H1 (cell line): ENCODE measurements at regions of chr10 and their contacts with region 1.

Region 1: DNA sequence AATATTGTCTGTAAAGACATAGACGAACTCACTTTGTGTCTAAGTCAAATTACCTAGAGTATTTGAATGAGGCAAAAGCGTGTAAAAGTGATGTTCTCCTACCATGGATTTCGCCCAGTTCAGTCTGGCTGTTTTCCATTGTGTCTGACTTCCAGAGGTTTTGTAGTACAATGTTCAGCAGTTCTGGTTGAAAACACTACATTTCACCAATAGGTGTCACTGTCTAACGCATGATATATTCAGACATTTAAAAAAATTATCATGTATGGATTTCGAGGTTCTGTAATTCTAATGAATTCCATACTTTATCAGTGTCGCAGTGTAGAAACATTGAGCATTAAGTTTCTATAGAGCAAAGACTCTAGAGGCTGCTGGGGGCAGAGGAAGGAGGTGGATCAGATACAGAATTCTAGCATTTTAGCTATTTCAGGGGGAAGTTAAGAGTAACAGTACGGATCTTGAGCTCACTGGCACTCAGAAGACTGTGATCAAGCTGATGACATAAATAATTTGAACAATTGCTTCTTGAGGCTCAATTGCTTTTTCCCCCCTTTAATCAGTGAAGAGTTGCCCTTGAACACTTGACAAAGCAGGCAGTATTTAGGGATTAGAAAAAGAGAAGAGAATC is 196.9 kb upstream of the RHOBTB1 start:
- DNase-seq: no peak
- H3K4me3 ChIP-seq: no peak overlapping the region
- H3K27ac ChIP-seq: no peak overlapping the region
- H3K4me1 ChIP-seq: peaks cover 1 to 8% (median 6%) of the 10 kb centered on the region in 4 experiments; a peak in 6 of 7 replicates
- H3K27me3 ChIP-seq: no peaks in the 10 kb centered on the region
- CTCF ChIP-seq: peak in 2 of 3 experiments; percentile 16 to 52; a peak in 2 of 4 replicates
- EP300 ChIP-seq: no peak
- POLR2A ChIP-seq: no peak
- RAD21 ChIP-seq: peak; percentile 40 to 41; a peak in 3 of 4 replicates

Region 2: DNA sequence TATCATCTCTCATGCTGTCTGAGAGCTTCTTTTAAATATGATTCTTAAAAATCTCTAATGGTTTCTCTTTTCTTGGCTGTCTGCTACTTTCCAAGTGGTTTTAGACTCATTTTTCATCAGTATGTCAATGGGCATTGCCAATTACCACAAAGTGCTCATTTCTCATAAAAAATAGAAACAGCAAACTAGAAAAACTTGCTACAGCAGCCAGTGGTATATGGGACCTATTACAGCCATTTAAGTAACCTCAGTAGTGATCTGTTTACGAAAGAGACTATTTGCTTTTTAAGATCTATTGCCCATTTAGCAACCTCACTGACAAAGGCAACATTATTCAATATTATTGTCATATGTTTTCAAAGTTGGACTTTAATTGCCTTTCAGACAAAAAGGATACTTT is 10.2 kb after region 1 on chr10:
- CTCF ChIA-PET with region 1: interaction called, 28 read pairs
- POLR2A ChIA-PET with region 1: no interaction called
- DNase-seq: no peak
- H3K4me3 ChIP-seq: no peak overlapping the region
- H3K27ac ChIP-seq: no peak overlapping the region
- H3K4me1 ChIP-seq: no peaks in the 10 kb centered on the region
- H3K27me3 ChIP-seq: no peaks in the 10 kb centered on the region; a peak in 1 of 7 replicates
- CTCF ChIP-seq: no peak
- EP300 ChIP-seq: no peak
- POLR2A ChIP-seq: no peak
- RAD21 ChIP-seq: no peak

Region 3: GRCh38 chr10:61159253-61159652 is 18.4 kb after region 1 on chr10:
- CTCF ChIA-PET with region 1: interaction called, 28 read pairs
- POLR2A ChIA-PET with region 1: no interaction called
- DNase-seq: no peak
- H3K4me3 ChIP-seq: no peak overlapping the region
- H3K27ac ChIP-seq: no peak overlapping the region
- H3K4me1 ChIP-seq: no peaks in the 10 kb centered on the region
- H3K27me3 ChIP-seq: no peaks in the 10 kb centered on the region
- CTCF ChIP-seq: no peak
- EP300 ChIP-seq: no peak
- POLR2A ChIP-seq: no peak
- RAD21 ChIP-seq: no peak

Region 4: GRCh38 chr10:61188691-61189090 is 47.8 kb after region 1 on chr10:
- CTCF ChIA-PET with region 1: interaction called, 26 read pairs
- POLR2A ChIA-PET with region 1: no interaction called
- DNase-seq: no peak
- H3K4me3 ChIP-seq: no peak overlapping the region
- H3K27ac ChIP-seq: no peak overlapping the region
- H3K4me1 ChIP-seq: peaks cover 0 to 3% (median 0%) of the 10 kb centered on the region in 4 experiments; a peak in 1 of 7 replicates
- H3K27me3 ChIP-seq: no peaks in the 10 kb centered on the region
- CTCF ChIP-seq: no peak
- EP300 ChIP-seq: no peak
- POLR2A ChIP-seq: no peak
- RAD21 ChIP-seq: no peak

Region 5: GRCh38 chr10:61284222-61284890 is 143.5 kb after region 1 on chr10:
- CTCF ChIA-PET with region 1: interaction called, 10 read pairs
- POLR2A ChIA-PET with region 1: no interaction called
- DNase-seq: no peak
- H3K4me3 ChIP-seq: no peak overlapping the region
- H3K27ac ChIP-seq: no peak overlapping the region
- H3K4me1 ChIP-seq: no peaks in the 10 kb centered on the region
- H3K27me3 ChIP-seq: no peaks in the 10 kb centered on the region
- CTCF ChIP-seq: peak in 2 of 3 experiments; percentile 34 to 57; a peak in 2 of 4 replicates
- EP300 ChIP-seq: no peak
- POLR2A ChIP-seq: no peak
- RAD21 ChIP-seq: peak; percentile 65 to 71